ENCODE measurements at regions of chr22 and their contacts with region 1.

Region 1: GRCh38 chr22:36528795-36529751 is at the start of gene EIF3D:
- DNase-seq: peak; percentile 99
- H3K4me3 Mint-ChIP-seq: peak within 1 kb of the TSS; percentile 95
- H3K27ac Mint-ChIP-seq: peak within 1 kb of the TSS; percentile 98
- H3K4me1 Mint-ChIP-seq: peaks cover 20% of the 10 kb centered on the region
- H3K27me3 Mint-ChIP-seq: peaks cover 1% of the 10 kb centered on the region
- total RNA-seq, gene EIF3D: 314 to 321 TPM

Region 2: GRCh38 chr22:36425977-36426523 is 103.0 kb before region 1 on chr22:
- CTCF ChIA-PET with region 1: no interaction called
- POLR2A ChIA-PET with region 1: no interaction called
- intact Hi-C with region 1: no loop called
- DNase-seq: no peak
- H3K4me3 Mint-ChIP-seq: no peak overlapping the region
- H3K27ac Mint-ChIP-seq: peak overlapping the region; percentile 24
- H3K4me1 Mint-ChIP-seq: peaks cover 24% of the 10 kb centered on the region
- H3K27me3 Mint-ChIP-seq: no peaks in the 10 kb centered on the region

Region 3: DNA sequence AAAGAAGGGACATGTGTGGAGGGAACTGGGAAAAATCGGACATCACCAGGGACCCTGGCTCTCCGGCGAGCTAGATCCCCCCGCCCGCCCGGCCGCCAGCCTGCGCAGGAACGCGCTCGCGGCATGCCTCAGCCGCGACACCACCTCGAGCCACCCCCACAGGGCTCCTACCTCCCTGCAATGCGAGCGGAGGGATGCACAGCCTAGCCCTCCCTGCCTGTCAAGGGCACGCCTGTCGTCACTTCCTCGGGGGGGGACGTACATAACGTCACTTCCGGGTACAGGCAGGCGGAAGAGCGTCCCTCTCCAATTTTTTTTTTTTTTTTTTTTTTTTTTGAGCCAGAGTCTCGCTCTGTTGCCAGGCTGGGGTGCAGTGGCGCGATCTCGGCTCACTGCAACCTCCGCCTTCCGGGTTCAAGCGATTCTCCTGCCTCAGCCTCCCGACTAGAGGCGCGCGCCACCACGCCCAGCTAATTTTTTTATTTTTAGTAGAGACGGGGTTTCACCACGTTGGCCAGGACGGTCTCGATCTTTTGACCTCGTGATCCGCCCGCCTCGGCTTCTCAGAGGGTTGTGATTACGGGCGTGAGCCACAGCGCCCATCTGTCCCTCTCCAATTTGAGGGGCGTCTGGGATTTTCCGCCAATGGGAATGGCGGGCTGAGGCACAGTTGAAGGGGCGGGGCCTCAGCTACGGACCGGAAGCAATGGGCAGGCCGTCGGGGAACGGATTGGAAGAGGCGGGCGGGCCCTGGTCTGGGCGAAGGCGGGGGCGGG is 47.5 kb before region 1 on chr22 and contains the start of gene TXN2:
- CTCF ChIA-PET with region 1: no interaction called
- POLR2A ChIA-PET with region 1: no interaction called
- intact Hi-C with region 1: loop called (anchors 1 kb)
- DNase-seq: peak; percentile 96
- H3K4me3 Mint-ChIP-seq: peak within 1 kb of the TSS; percentile 100
- H3K27ac Mint-ChIP-seq: peak within 1 kb of the TSS; percentile 96
- H3K4me1 Mint-ChIP-seq: peaks cover 15% of the 10 kb centered on the region
- H3K27me3 Mint-ChIP-seq: no peaks in the 10 kb centered on the region
- total RNA-seq, gene TXN2: 94.3 to 97.0 TPM

Region 4: GRCh38 chr22:36506637-36507517 is 22.2 kb before region 1 on chr22 and contains the start of gene FOXRED2:
- CTCF ChIA-PET with region 1: interaction called, 8 read pairs
- POLR2A ChIA-PET with region 1: interaction called, 18 read pairs
- intact Hi-C with region 1: loop called (anchors 2 kb)
- DNase-seq: peak; percentile 92
- H3K4me3 Mint-ChIP-seq: peak within 1 kb of the TSS; percentile 72
- H3K27ac Mint-ChIP-seq: peak within 1 kb of the TSS; percentile 54
- H3K4me1 Mint-ChIP-seq: peaks cover 19% of the 10 kb centered on the region
- H3K27me3 Mint-ChIP-seq: no peaks in the 10 kb centered on the region
- total RNA-seq, gene FOXRED2: 15.2 to 15.9 TPM

Region 5: GRCh38 chr22:36546092-36546804 is 17.2 kb after region 1 on chr22:
- CTCF ChIA-PET with region 1: interaction called, 3 read pairs
- POLR2A ChIA-PET with region 1: interaction called, 3 read pairs
- intact Hi-C with region 1: loop called (anchors 1 kb)
- DNase-seq: peak; percentile 57
- H3K4me3 Mint-ChIP-seq: no peak overlapping the region
- H3K27ac Mint-ChIP-seq: no peak overlapping the region
- H3K4me1 Mint-ChIP-seq: peaks cover 16% of the 10 kb centered on the region
- H3K27me3 Mint-ChIP-seq: peaks cover 10% of the 10 kb centered on the region

Region 6: GRCh38 chr22:36775964-36776669 is 247.0 kb after region 1 on chr22 and contains the start of gene IFT27:
- CTCF ChIA-PET with region 1: no interaction called
- POLR2A ChIA-PET with region 1: interaction called, 3 read pairs
- intact Hi-C with region 1: loop called (anchors 1 kb)
- DNase-seq: peak; percentile 99
- H3K4me3 Mint-ChIP-seq: peak within 1 kb of the TSS; percentile 84
- H3K27ac Mint-ChIP-seq: peak within 1 kb of the TSS; percentile 90
- H3K4me1 Mint-ChIP-seq: peaks cover 30% of the 10 kb centered on the region
- H3K27me3 Mint-ChIP-seq: no peaks in the 10 kb centered on the region
- total RNA-seq, gene IFT27: 27.9 to 32.1 TPM